MCF 10A (cell line): ENCODE measurements at regions of chr7 and their contacts with region 1.

Region 1: GRCh38 chr7:2757904-2758672 is 70.1 kb downstream of the AMZ1 start:
- DNase-seq: peak; percentile 96
- H3K4me3 Mint-ChIP-seq: peak overlapping the region; percentile 63
- H3K27ac Mint-ChIP-seq: peak overlapping the region; percentile 77
- H3K4me1 Mint-ChIP-seq: peaks cover 40% of the 10 kb centered on the region
- H3K27me3 Mint-ChIP-seq: no peaks in the 10 kb centered on the region
- CTCF ChIP-seq: no peak

Region 2: GRCh38 chr7:2771274-2771731 is 13.2 kb after region 1 on chr7:
- CTCF ChIA-PET with region 1: interaction called, 3 read pairs
- POLR2A ChIA-PET with region 1: interaction called, 11 read pairs
- intact Hi-C with region 1: no loop called
- DNase-seq: no peak
- H3K4me3 Mint-ChIP-seq: no peak overlapping the region
- H3K27ac Mint-ChIP-seq: no peak overlapping the region
- H3K4me1 Mint-ChIP-seq: peaks cover 3% of the 10 kb centered on the region
- H3K27me3 Mint-ChIP-seq: no peaks in the 10 kb centered on the region
- CTCF ChIP-seq: no peak

Region 3: DNA sequence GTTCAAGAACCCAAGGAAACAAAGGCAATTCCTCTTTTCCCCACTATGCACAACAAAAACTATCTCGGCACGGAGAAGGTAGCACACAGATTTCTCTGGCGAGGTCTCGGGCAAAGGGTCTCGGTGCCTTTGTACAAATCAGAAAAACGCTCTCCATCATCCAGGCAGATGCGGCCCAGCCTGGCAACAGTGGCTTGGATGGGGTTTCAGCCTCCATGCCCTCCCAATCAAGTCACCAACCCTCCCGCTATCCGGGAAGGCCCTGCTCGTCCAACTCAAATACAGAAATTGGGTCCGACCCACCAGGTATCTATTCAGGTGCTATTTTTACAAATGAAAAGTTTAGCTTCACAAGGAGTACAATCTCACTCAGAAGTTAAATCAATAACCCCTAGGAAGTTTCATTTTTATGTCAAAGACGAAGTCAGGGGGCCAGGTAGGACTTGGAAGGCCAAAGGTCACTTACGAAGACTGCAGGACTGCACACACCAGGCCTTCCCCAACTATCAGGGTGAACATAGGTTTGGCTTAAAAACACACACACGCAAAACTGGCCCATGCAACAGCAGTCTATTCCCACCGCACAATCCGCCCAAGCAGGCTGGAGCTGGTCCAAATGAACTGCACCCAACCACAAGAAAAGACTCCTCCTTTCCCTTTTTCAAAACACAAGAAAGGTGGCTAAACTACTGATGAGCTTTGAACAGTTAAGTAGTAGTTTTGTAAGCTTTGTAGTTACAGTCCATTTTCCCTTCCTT is 43.0 kb after region 1 on chr7:
- CTCF ChIA-PET with region 1: no interaction called
- POLR2A ChIA-PET with region 1: interaction called, 11 read pairs
- intact Hi-C with region 1: no loop called
- DNase-seq: peak; percentile 43
- H3K4me3 Mint-ChIP-seq: no peak overlapping the region
- H3K27ac Mint-ChIP-seq: no peak overlapping the region
- H3K4me1 Mint-ChIP-seq: peaks cover 34% of the 10 kb centered on the region
- H3K27me3 Mint-ChIP-seq: no peaks in the 10 kb centered on the region
- CTCF ChIP-seq: no peak

Region 4: DNA sequence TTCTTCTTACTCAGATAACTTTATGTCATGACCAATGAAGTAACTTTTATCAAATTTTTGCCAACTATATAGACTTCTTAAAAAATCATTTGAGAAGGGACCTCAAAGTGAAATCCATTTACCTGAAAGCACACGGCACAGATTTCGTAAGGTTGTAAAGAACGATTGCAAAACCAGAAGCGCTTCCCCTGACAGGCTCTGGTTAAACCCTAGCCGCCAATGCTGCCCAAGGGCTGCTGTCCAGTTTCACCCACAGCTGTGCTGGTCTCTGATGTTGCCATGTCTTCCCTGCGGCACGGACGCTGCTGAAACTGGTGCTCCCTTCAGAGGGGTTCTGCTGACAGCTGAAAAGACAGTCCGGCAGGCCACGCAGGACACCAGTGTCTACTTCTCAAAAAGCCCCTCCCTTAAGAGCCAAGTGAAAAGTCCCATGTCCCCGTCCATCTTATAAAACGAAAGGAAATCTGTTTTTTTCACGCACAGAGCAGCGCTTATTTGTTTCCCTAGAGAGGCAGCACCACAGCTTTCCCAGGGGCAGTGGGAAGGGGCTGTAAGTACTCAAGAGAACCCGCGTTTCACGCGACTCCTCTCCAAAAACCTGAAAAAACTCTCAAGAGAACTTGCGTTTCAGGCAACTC is 53.5 kb after region 1 on chr7:
- CTCF ChIA-PET with region 1: no interaction called
- POLR2A ChIA-PET with region 1: interaction called, 20 read pairs
- intact Hi-C with region 1: no loop called
- DNase-seq: peak; percentile 93
- H3K4me3 Mint-ChIP-seq: peak overlapping the region; percentile 65
- H3K27ac Mint-ChIP-seq: peak overlapping the region; percentile 93
- H3K4me1 Mint-ChIP-seq: peaks cover 36% of the 10 kb centered on the region
- H3K27me3 Mint-ChIP-seq: no peaks in the 10 kb centered on the region
- CTCF ChIP-seq: no peak

Region 5: GRCh38 chr7:2821161-2821841 is 63.2 kb after region 1 on chr7:
- CTCF ChIA-PET with region 1: interaction called, 7 read pairs
- POLR2A ChIA-PET with region 1: interaction called, 74 read pairs
- intact Hi-C with region 1: loop called (anchors 5 kb)
- DNase-seq: peak; percentile 85
- H3K4me3 Mint-ChIP-seq: peak overlapping the region; percentile 36
- H3K27ac Mint-ChIP-seq: peak overlapping the region; percentile 96
- H3K4me1 Mint-ChIP-seq: peaks cover 41% of the 10 kb centered on the region
- H3K27me3 Mint-ChIP-seq: no peaks in the 10 kb centered on the region
- CTCF ChIP-seq: no peak

Region 6: DNA sequence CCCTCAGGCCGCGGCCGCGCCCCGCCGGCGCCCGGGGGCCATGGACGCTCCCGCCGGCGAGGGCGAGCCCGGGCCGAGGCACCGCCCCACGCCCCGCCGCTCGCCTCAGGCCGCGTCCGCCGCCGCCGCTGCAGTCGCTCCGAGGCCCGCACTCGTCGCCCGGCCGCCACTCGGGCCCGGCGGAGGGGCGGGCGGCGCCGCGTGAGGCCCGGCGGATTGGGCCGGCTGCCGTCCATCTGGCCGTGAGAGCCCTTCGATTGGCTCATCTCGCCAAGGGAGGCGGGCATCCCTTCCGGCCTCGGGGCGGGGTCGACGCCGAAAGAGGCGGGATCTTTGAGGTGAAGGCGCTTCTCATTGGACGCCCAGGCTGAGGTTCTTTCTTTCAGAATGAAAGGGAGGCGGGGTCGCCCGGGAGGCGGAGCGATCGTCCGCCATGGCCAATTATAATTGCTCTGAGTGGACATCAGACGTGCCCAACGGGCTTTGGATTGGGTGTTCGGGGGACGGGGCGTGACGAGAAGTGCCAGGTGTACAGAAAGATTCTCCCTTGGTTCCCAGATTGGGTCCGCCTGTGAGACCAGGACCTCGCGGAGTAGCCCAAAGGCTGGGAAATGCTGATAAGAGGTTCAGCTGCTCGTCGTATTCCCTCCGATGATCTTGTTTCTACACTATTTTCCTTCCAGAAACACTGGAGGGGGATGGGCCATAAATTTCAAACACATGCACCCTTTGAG is 86.2 kb after region 1 on chr7 and contains the start of gene GNA12:
- CTCF ChIA-PET with region 1: no interaction called
- POLR2A ChIA-PET with region 1: interaction called, 8 read pairs
- intact Hi-C with region 1: loop called (anchors 5 kb)
- DNase-seq: peak; percentile 99
- H3K4me3 Mint-ChIP-seq: peak within 1 kb of the TSS; percentile 75
- H3K27ac Mint-ChIP-seq: peak within 1 kb of the TSS; percentile 61
- H3K4me1 Mint-ChIP-seq: peaks cover 22% of the 10 kb centered on the region
- H3K27me3 Mint-ChIP-seq: no peaks in the 10 kb centered on the region
- CTCF ChIP-seq: no peak
- total RNA-seq, gene GNA12: 36.2 and 38.6 TPM in 2 replicates

Region 7: GRCh38 chr7:2863461-2864066 is 105.5 kb after region 1 on chr7:
- CTCF ChIA-PET with region 1: interaction called, 3 read pairs
- POLR2A ChIA-PET with region 1: no interaction called
- intact Hi-C with region 1: loop called (anchors 5 kb)
- DNase-seq: peak; percentile 95
- H3K4me3 Mint-ChIP-seq: peak overlapping the region; percentile 72
- H3K27ac Mint-ChIP-seq: peak overlapping the region; percentile 98
- H3K4me1 Mint-ChIP-seq: peaks cover 14% of the 10 kb centered on the region
- H3K27me3 Mint-ChIP-seq: no peaks in the 10 kb centered on the region
- CTCF ChIP-seq: no peak

Region 8: DNA sequence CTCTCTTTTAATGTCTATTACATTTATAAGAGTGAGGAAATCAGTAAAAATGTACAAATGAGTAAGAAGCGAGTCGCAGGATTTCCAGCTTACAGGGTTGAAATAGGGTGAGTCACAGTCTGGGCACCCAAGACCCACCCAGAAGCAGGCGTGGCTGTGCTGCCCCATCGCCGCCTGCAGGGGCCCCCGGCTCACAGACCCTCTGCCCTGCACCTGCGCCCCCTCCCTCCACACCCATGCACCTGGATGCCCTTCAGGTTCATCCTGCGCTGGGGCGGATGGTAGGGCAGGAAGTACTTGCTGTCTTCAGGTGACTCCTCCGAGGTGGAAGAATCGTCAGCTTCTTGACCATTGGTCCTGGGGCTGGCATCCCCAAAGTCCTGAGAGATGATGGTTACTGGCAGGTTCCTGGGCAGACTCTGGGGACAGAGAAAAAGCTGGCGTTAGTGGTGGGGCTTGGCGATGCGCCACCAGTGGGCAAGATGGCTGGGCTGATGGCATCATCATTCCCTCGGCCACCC is 176.2 kb after region 1 on chr7:
- CTCF ChIA-PET with region 1: no interaction called
- POLR2A ChIA-PET with region 1: no interaction called
- intact Hi-C with region 1: no loop called
- DNase-seq: peak; percentile 77
- H3K4me3 Mint-ChIP-seq: peak overlapping the region; percentile 7
- H3K27ac Mint-ChIP-seq: peak overlapping the region; percentile 82
- H3K4me1 Mint-ChIP-seq: peaks cover 10% of the 10 kb centered on the region
- H3K27me3 Mint-ChIP-seq: no peaks in the 10 kb centered on the region
- CTCF ChIP-seq: peak; percentile 34

Region 9: GRCh38 chr7:2978403-2978802 is 220.3 kb after region 1 on chr7:
- CTCF ChIA-PET with region 1: no interaction called
- POLR2A ChIA-PET with region 1: no interaction called
- intact Hi-C with region 1: no loop called
- DNase-seq: no peak
- H3K4me3 Mint-ChIP-seq: no peak overlapping the region
- H3K27ac Mint-ChIP-seq: no peak overlapping the region
- H3K4me1 Mint-ChIP-seq: no peaks in the 10 kb centered on the region
- H3K27me3 Mint-ChIP-seq: peaks cover 14% of the 10 kb centered on the region
- CTCF ChIP-seq: no peak